IMR-90 (cell line): ENCODE measurements at regions of chr2 and their contacts with region 1.

Region 1: GRCh38 chr2:88016086-88016959 is at the start of gene RNU2-63P:
- DNase-seq: peak; percentile 96
- ATAC-seq: peak; percentile 96
- H3K4me3 ChIP-seq: peak within 1 kb of the TSS; percentile 55
- H3K27ac ChIP-seq: peak within 1 kb of the TSS; percentile 77
- H3K4me1 ChIP-seq: no peaks in the 10 kb centered on the region
- H3K27me3 ChIP-seq: no peaks in the 10 kb centered on the region
- CTCF ChIP-seq: no peak
- POLR2A ChIP-seq: peak; percentile 100
- RAD21 ChIP-seq: no peak
- total RNA-seq, gene RNU2-63P: under 0.01 and 174 TPM in 2 replicates

Region 2: GRCh38 chr2:88027697-88028389 is 11.5 kb after region 1 on chr2:
- CTCF ChIA-PET with region 1: no interaction called
- POLR2A ChIA-PET with region 1: no interaction called
- dilution Hi-C with region 1: no loop called
- in situ Hi-C with region 1: no loop called
- intact Hi-C with region 1: loop called (anchors 2 kb)
- DNase-seq: no peak
- ATAC-seq: no peak
- H3K4me3 ChIP-seq: no peak overlapping the region
- H3K27ac ChIP-seq: no peak overlapping the region
- H3K4me1 ChIP-seq: no peaks in the 10 kb centered on the region
- H3K27me3 ChIP-seq: no peaks in the 10 kb centered on the region
- CTCF ChIP-seq: no peak
- POLR2A ChIP-seq: no peak
- RAD21 ChIP-seq: no peak